Gastrocnemius medialis (tissue), 4 donors: ENCODE measurements at regions of chr19 and their contacts with region 1.

Region 1: DNA sequence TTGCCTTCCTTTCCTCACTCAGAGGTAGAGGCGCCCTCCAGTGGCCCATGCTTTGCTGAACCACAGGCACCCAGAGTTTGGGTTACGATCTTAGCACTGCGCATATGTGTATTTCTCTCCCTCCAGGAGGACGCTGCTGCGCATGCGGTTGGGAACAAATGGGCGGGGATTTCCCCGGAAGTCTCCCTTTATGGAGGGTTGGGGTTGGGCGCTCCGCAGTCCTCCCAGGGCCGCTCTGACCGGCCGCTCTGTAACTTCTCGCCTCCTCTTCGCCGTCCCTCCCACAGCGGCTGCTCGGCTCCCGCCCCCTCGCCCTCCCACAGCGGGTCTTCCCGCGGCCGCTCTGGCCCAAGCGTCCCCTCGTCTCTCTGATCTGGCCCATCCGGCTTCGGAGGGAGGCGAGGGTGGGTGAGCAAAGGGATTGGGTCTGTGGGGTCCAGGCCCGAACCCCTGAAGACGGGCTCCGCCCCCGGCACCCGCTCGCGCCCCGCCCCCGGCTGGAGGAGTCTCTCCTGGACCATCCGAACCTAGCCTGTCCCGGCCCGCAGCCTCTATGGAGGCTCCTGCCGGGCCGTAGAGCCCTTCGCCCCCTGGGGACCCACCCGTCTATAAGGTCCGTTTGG is at the start of gene MEGF8:
- DNase-seq: peak; percentile 96 to 98
- ATAC-seq: peak; percentile 99
- H3K4me3 ChIP-seq: peak within 1 kb of the TSS; percentile 64 to 96 (median 80)
- H3K27ac ChIP-seq: peak within 1 kb of the TSS; percentile 64 to 89 (median 84)
- H3K4me1 ChIP-seq: peaks cover 26 to 32% of the 10 kb centered on the region in 2 donors
- H3K27me3 ChIP-seq: peaks cover 14 to 20% (median 18%) of the 10 kb centered on the region in 3 donors
- CTCF ChIP-seq: peak; percentile 78 to 86 (median 82)
- POLR2A ChIP-seq: peak; percentile 67 to 84
- total RNA-seq, gene MEGF8: 7.3 to 12.3 (median 10.3) TPM

Region 2: DNA sequence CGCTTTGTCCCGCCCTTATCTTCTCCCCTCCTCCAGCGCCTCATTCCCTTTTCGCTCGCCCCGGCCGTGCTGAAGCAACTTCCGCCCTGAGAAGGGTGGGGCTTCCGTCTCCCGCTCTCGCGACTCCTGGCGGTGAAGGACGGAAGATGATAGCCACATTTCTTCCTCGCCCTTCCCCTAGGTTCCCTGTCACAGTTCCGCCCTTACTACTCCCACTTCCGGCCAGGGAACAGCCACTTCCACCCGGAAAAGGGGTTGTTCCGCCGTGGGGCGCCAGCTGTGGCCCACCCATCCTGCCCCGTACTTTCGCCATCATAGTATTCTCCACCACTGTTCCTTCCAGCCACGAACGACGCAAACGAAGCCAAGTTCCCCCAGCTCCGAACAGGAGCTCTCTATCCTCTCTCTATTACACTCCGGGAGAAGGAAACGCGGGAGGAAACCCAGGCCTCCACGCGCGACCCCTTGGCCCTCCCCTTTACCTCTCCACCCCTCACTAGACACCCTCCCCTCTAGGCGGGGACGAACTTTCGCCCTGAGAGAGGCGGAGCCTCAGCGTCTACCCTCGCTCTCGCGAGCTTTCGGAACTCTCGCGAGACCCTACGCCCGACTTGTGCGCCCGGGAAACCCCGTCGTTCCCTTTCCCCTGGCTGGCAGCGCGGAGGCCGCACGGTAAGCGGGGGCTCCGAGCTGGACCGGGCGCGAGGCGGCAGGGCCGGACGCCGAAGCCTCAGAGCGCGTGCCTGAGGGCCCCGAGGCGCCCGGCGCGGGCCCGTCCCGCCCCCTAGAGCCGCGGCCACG is 465.6 kb before region 1 on chr19 and contains the start of gene RPS19:
- in situ Hi-C with region 1: no loop called
- intact Hi-C with region 1: loop called (anchors 10 kb)
- DNase-seq: peak; percentile 97 to 98
- ATAC-seq: peak; percentile 96
- H3K4me3 ChIP-seq: peak within 1 kb of the TSS; percentile 70 to 94 (median 92)
- H3K27ac ChIP-seq: peak within 1 kb of the TSS; percentile 86 to 100 (median 98)
- H3K4me1 ChIP-seq: peaks cover 26 to 37% of the 10 kb centered on the region in 2 donors
- H3K27me3 ChIP-seq: no peaks in the 10 kb centered on the region
- CTCF ChIP-seq: peak; percentile 48 to 75 (median 64)
- POLR2A ChIP-seq: peak; percentile 92 to 93
- total RNA-seq, gene RPS19: 180 to 636 (median 401) TPM

Region 3: DNA sequence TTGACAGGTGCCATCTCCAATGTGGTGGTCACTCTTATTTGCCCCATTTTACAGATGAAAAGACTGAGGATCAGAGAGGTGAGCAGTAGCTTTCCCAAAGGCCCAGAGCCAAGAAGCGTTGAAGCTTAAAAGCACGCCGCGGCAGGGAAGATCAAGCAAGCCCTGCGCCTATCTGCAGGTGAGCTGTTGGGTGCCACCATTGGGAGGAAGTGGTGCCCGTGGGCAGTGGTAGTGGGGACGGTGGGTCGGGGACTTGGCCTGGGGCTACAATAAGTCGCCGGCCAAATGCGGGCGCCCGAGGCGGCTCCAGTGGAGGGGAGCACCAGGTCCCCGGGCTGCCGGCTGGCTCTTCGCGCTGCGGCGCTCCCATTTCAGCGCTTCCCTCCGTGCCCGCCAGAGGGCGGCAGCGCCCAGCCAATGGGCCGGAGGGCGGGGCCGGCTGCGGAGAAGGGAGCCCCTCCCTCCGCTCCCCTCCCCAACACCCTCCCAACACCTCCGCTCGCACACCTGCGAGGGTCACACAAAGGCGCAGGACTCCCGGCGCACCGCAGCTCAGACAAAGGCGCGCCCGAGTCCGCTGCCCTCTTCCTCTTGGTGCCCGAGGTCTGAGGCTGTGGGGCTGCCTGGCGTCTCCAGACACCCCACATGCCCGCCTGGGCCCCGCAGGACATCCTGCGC is 192.4 kb before region 1 on chr19:
- in situ Hi-C with region 1: loop called in 1 of 4 experiments (anchors 25 kb)
- intact Hi-C with region 1: loop called (anchors 5 kb)
- DNase-seq: peak in 1 of 2 donors; percentile 22
- ATAC-seq: peak; percentile 67 to 86
- H3K4me3 ChIP-seq: peak overlapping the region; percentile 26 to 43 (median 37)
- H3K27ac ChIP-seq: no peak overlapping the region
- H3K4me1 ChIP-seq: peaks cover 3 to 7% of the 10 kb centered on the region in 2 donors
- H3K27me3 ChIP-seq: peaks cover 20 to 29% (median 22%) of the 10 kb centered on the region in 3 donors
- CTCF ChIP-seq: peak; percentile 76 to 94 (median 90)
- POLR2A ChIP-seq: no peak

Region 4: DNA sequence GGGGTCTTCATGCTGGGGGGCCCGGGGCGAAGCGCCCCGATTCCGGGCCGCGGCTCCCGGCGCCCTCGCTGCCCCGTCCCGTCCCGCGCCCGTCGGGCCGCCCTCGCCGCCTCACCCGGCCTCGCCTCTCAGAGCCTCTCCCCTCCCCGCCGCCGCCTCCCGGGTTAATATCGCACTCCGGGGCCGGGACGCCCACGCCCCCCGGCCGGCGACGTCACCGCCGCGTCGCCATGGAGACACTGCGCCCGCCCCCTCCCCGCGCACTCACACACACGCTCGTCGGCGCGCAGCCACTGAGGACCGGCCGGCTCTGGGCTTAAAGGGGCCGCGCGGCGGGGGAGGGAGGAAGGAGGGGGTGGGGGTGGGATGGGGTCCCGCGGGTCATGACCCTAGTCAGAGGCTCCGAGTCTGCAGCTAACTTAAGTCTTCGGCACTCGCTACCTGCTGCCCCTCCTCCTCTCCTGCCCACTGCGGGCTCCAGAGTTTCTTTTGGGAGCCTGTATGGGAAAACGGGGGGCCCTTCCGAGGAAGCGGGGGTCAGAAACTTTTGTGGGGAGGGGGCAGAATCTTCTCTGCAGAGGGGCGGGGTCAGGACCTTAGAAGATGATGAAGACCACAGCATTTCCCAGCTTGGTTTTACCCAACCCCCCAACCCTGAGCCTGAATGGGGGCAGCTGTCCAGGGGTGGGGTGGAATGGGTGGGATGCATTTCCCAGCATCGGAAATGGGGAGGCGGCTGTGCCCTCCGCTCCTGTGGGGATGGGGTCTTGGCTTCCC is 70.2 kb before region 1 on chr19 and contains the start of gene ERF:
- in situ Hi-C with region 1: no loop called
- intact Hi-C with region 1: loop called (anchors 2 kb)
- DNase-seq: peak; percentile 68 to 80
- ATAC-seq: peak; percentile 40 to 54
- H3K4me3 ChIP-seq: peak within 1 kb of the TSS; percentile 60 to 90 (median 76)
- H3K27ac ChIP-seq: peak within 1 kb of the TSS; percentile 91 to 94 (median 92)
- H3K4me1 ChIP-seq: peaks cover 28 to 30% of the 10 kb centered on the region in 2 donors
- H3K27me3 ChIP-seq: peaks cover 24 to 40% (median 37%) of the 10 kb centered on the region in 3 donors
- CTCF ChIP-seq: peak in 1 of 5 experiments; percentile 24
- POLR2A ChIP-seq: peak; percentile 80 to 96
- total RNA-seq, gene ERF: 14.0 to 26.7 (median 14.8) TPM

Region 5: GRCh38 chr19:42283143-42284065 is 42.0 kb before region 1 on chr19:
- in situ Hi-C with region 1: no loop called
- intact Hi-C with region 1: loop called (anchors 1 kb)
- DNase-seq: peak; percentile 89 to 96
- ATAC-seq: peak; percentile 64 to 71
- H3K4me3 ChIP-seq: peak overlapping the region; percentile 43 to 60 (median 58)
- H3K27ac ChIP-seq: peak overlapping the region; percentile 95 to 97 (median 96)
- H3K4me1 ChIP-seq: peaks cover 58 to 64% of the 10 kb centered on the region in 2 donors
- H3K27me3 ChIP-seq: no peaks in the 10 kb centered on the region
- CTCF ChIP-seq: no peak
- POLR2A ChIP-seq: peak in 1 of 2 donors; percentile 68

Region 6: GRCh38 chr19:42370626-42371170 is 45.3 kb after region 1 on chr19:
- in situ Hi-C with region 1: no loop called
- intact Hi-C with region 1: no loop called
- DNase-seq: no peak
- ATAC-seq: no peak
- H3K4me3 ChIP-seq: no peak overlapping the region
- H3K27ac ChIP-seq: no peak overlapping the region
- H3K4me1 ChIP-seq: peaks cover 0 to 4% of the 10 kb centered on the region in 2 donors
- H3K27me3 ChIP-seq: no peaks in the 10 kb centered on the region
- CTCF ChIP-seq: no peak
- POLR2A ChIP-seq: no peak